CD14-positive monocyte (primary cell): ENCODE measurements at regions of chr17 and their contacts with region 1.

Region 1: GRCh38 chr17:62968445-62968923 is 2.4 kb downstream of the TANC2 start:
- DNase-seq: peak; percentile 72 to 85 (median 85)
- H3K4me3 ChIP-seq: no peak overlapping the region
- H3K4me3 Mint-ChIP-seq: no peak overlapping the region
- H3K27ac ChIP-seq: no peak overlapping the region
- H3K27ac Mint-ChIP-seq: no peak overlapping the region
- H3K4me1 ChIP-seq: peaks cover 25 to 29% of the 10 kb centered on the region in 2 donors
- H3K4me1 Mint-ChIP-seq: peaks cover 24% of the 10 kb centered on the region
- H3K27me3 ChIP-seq: peaks cover 0 to 4% of the 10 kb centered on the region in 2 donors
- H3K27me3 Mint-ChIP-seq: peaks cover 2 to 8% (median 4%) of the 10 kb centered on the region in 3 donors
- CTCF ChIP-seq: peak; percentile 87

Region 2: DNA sequence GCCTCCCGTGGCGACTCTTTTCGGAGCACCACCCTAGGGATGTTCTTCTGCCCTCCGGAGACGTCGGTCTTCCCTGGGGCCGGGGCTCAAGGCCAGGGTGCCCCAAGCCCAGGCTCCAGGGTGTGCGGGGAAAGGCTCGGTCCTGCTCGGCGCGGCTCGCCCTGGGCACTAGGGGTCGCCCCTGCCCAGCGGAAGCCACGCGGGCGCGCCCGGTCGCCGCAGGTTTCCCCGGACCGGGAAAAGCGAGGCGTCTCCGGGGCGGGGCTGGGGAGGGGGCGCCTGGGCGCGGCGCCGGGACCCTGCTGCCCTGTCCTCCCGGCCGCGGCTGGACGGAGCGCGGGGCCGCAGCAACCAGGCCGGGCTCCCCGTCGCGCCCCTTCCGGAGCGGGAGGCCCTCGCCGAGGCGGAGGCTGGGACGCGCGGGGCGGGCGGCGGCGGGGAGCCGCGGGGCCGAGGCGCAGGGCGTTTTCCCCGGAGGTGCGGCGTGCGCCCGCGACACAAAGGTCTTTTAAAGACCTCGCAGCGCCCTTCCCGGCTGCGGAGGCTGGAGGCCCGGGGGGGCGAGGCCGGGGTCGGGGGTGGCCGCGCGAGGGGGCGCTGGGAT is 264.6 kb before region 1 on chr17:
- intact Hi-C with region 1: loop called (anchors 1 kb)
- DNase-seq: peak; percentile 40 to 67 (median 57)
- H3K4me3 ChIP-seq: peak overlapping the region; percentile 7 to 75 (median 22)
- H3K4me3 Mint-ChIP-seq: peak overlapping the region; percentile 35 to 60
- H3K27ac ChIP-seq: no peak overlapping the region
- H3K27ac Mint-ChIP-seq: no peak overlapping the region
- H3K4me1 ChIP-seq: peaks cover 9 to 12% of the 10 kb centered on the region in 2 donors
- H3K4me1 Mint-ChIP-seq: peaks cover 10% of the 10 kb centered on the region
- H3K27me3 ChIP-seq: peaks cover 0 to 20% of the 10 kb centered on the region in 2 donors
- H3K27me3 Mint-ChIP-seq: peaks cover 19 to 39% (median 20%) of the 10 kb centered on the region in 3 donors
- CTCF ChIP-seq: peak; percentile 86

Region 3: GRCh38 chr17:62882878-62883277 is 85.6 kb before region 1 on chr17:
- intact Hi-C with region 1: loop called (anchors 1 to 10 kb)
- DNase-seq: peak; percentile 82 to 94 (median 91)
- H3K4me3 ChIP-seq: peak overlapping the region in 1 of 3 experiments; percentile 40
- H3K4me3 Mint-ChIP-seq: peak overlapping the region in 1 of 2 donors; percentile 57
- H3K27ac ChIP-seq: peak overlapping the region; percentile 34 to 89
- H3K27ac Mint-ChIP-seq: peak overlapping the region; percentile 90 to 94 (median 94)
- H3K4me1 ChIP-seq: peaks cover 34 to 37% of the 10 kb centered on the region in 2 donors
- H3K4me1 Mint-ChIP-seq: peaks cover 28% of the 10 kb centered on the region
- H3K27me3 ChIP-seq: no peaks in the 10 kb centered on the region
- H3K27me3 Mint-ChIP-seq: no peaks in the 10 kb centered on the region
- CTCF ChIP-seq: no peak

Region 4: DNA sequence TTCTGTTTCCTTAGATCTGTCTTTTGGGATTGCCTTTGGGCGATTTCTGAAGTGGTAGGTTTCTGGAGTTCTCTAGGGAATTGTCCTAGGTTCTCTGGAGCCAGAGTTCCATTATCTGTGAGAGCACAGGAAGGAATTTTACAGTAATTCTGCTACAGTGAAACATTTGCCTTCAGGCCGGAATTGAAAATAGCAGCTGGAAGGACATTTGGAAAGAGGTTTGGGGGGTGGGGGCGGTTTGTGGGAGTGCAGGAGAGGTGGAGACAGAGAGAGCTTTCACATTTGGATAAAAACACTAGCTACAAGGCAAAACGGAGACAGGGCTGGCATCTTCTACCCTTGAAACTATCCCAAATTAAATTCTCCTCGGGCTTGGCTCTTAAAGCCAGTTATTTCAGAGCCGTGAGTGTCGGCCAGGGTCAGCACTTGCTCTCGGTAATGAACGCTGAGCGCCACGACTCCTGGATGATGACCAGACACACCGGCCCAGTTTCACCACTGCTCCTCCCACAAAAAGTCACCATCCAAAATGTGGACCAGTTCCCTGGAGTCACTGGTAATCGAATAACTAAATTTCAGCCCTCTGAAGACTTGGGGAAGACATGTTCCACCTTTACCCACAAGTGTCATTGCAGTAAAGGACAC is 70.1 kb before region 1 on chr17:
- intact Hi-C with region 1: loop called in 1 of 2 experiments (anchors 5 kb)
- DNase-seq: no peak
- H3K4me3 ChIP-seq: no peak overlapping the region
- H3K4me3 Mint-ChIP-seq: no peak overlapping the region
- H3K27ac ChIP-seq: no peak overlapping the region
- H3K27ac Mint-ChIP-seq: peak overlapping the region in 3 of 7 donors; percentile 81 to 89 (median 88)
- H3K4me1 ChIP-seq: peaks cover 40 to 41% of the 10 kb centered on the region in 2 donors
- H3K4me1 Mint-ChIP-seq: peaks cover 43% of the 10 kb centered on the region
- H3K27me3 ChIP-seq: no peaks in the 10 kb centered on the region
- H3K27me3 Mint-ChIP-seq: peaks cover 3 to 4% (median 3%) of the 10 kb centered on the region in 3 donors
- CTCF ChIP-seq: no peak